Activated CD4-positive, alpha-beta memory T cell treated with anti-CD3 and anti-CD28 coated beads for 36 hours (primary cell): ENCODE measurements at regions of chr17 and their contacts with region 1.

Region 1: GRCh38 chr17:55735731-55736405 is 13.2 kb upstream of the TMEM100 start:
- DNase-seq: peak; percentile 40
- H3K4me3 Mint-ChIP-seq: no peak overlapping the region
- H3K27ac Mint-ChIP-seq: peak overlapping the region; percentile 10
- H3K4me1 Mint-ChIP-seq: peaks cover 24% of the 10 kb centered on the region
- H3K27me3 Mint-ChIP-seq: peaks cover 41% of the 10 kb centered on the region

Region 2: GRCh38 chr17:55348749-55349354 is 387.0 kb before region 1 on chr17:
- CTCF ChIA-PET with region 1: interaction called, 7 read pairs
- POLR2A ChIA-PET with region 1: no interaction called
- intact Hi-C with region 1: loop called (anchors 10 kb)
- DNase-seq: peak; percentile 58
- H3K4me3 Mint-ChIP-seq: no peak overlapping the region
- H3K27ac Mint-ChIP-seq: no peak overlapping the region
- H3K4me1 Mint-ChIP-seq: peaks cover 33% of the 10 kb centered on the region
- H3K27me3 Mint-ChIP-seq: peaks cover 2% of the 10 kb centered on the region

Region 3: DNA sequence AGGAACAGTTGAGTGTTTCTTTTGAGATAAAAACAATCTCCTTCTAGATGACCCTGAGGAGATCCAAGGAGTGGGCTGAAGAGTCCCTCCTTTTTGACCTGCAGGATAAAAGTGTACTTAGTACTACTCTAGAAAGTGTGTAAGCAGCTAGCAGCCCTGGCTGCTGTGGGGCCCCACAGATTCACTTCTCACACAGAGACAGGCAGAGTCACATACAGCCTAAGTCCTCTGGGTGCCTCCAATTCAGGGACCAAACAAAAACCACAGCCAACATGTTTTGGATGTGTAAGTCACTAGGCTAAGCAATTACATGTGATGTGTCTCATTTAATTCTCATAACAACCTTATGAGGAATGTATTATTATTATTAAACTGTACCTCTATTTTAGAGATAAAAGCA is 110.3 kb before region 1 on chr17:
- CTCF ChIA-PET with region 1: interaction called, 4 read pairs
- POLR2A ChIA-PET with region 1: interaction called, 6 read pairs
- intact Hi-C with region 1: loop called (anchors 1 kb)
- DNase-seq: peak; percentile 52
- H3K4me3 Mint-ChIP-seq: no peak overlapping the region
- H3K27ac Mint-ChIP-seq: no peak overlapping the region
- H3K4me1 Mint-ChIP-seq: peaks cover 19% of the 10 kb centered on the region
- H3K27me3 Mint-ChIP-seq: peaks cover 16% of the 10 kb centered on the region

Region 4: GRCh38 chr17:55750750-55751657 is 15.1 kb after region 1 on chr17 and contains the start of gene PCTP:
- CTCF ChIA-PET with region 1: interaction called, 18 read pairs
- POLR2A ChIA-PET with region 1: interaction called, 17 read pairs
- intact Hi-C with region 1: loop called (anchors 1 kb)
- DNase-seq: peak; percentile 93
- H3K4me3 Mint-ChIP-seq: peak within 1 kb of the TSS; percentile 75
- H3K27ac Mint-ChIP-seq: no peak within 1 kb of the TSS
- H3K4me1 Mint-ChIP-seq: peaks cover 14% of the 10 kb centered on the region
- H3K27me3 Mint-ChIP-seq: peaks cover 18% of the 10 kb centered on the region
- total RNA-seq, gene PCTP: 9.3 to 9.8 TPM

Region 5: GRCh38 chr17:56779898-56780733 is 1044.2 kb after region 1 on chr17:
- CTCF ChIA-PET with region 1: no interaction called
- POLR2A ChIA-PET with region 1: no interaction called
- intact Hi-C with region 1: loop called (anchors 10 kb)
- DNase-seq: peak; percentile 91
- H3K4me3 Mint-ChIP-seq: peak overlapping the region; percentile 79
- H3K27ac Mint-ChIP-seq: peak overlapping the region; percentile 74
- H3K4me1 Mint-ChIP-seq: peaks cover 23% of the 10 kb centered on the region
- H3K27me3 Mint-ChIP-seq: peaks cover 2% of the 10 kb centered on the region